Colonic mucosa (tissue), 4 donors: ENCODE measurements at regions of chr15 and their contacts with region 1.

Region 1: GRCh38 chr15:23642413-23643044 is 5.1 kb downstream of the MAGEL2 start:
- DNase-seq: peak; percentile 60
- H3K4me3 ChIP-seq: no peak overlapping the region
- H3K27ac ChIP-seq: no peak overlapping the region
- H3K4me1 ChIP-seq: no peaks in the 10 kb centered on the region
- H3K27me3 ChIP-seq: no peaks in the 10 kb centered on the region
- CTCF ChIP-seq: peak; percentile 76

Region 2: GRCh38 chr15:23866832-23867231 is 224.3 kb after region 1 on chr15:
- intact Hi-C with region 1: loop called (anchors 5 kb)
- DNase-seq: no peak
- H3K4me3 ChIP-seq: no peak overlapping the region
- H3K27ac ChIP-seq: no peak overlapping the region
- H3K4me1 ChIP-seq: no peaks in the 10 kb centered on the region
- H3K27me3 ChIP-seq: no peaks in the 10 kb centered on the region
- CTCF ChIP-seq: no peak

Region 3: GRCh38 chr15:23912191-23912590 is 269.7 kb after region 1 on chr15:
- intact Hi-C with region 1: no loop called
- DNase-seq: no peak
- H3K4me3 ChIP-seq: no peak overlapping the region
- H3K27ac ChIP-seq: no peak overlapping the region
- H3K4me1 ChIP-seq: no peaks in the 10 kb centered on the region
- H3K27me3 ChIP-seq: no peaks in the 10 kb centered on the region
- CTCF ChIP-seq: no peak

Region 4: GRCh38 chr15:25508369-25509002 is 1866.0 kb after region 1 on chr15:
- intact Hi-C with region 1: loop called (anchors 10 kb)
- DNase-seq: no peak
- H3K4me3 ChIP-seq: no peak overlapping the region
- H3K27ac ChIP-seq: no peak overlapping the region
- H3K4me1 ChIP-seq: no peaks in the 10 kb centered on the region
- H3K27me3 ChIP-seq: no peaks in the 10 kb centered on the region
- CTCF ChIP-seq: peak; percentile 35